CD4-positive, alpha-beta memory T cell (primary cell): ENCODE measurements at regions of chr5 and their contacts with region 1.

Region 1: DNA sequence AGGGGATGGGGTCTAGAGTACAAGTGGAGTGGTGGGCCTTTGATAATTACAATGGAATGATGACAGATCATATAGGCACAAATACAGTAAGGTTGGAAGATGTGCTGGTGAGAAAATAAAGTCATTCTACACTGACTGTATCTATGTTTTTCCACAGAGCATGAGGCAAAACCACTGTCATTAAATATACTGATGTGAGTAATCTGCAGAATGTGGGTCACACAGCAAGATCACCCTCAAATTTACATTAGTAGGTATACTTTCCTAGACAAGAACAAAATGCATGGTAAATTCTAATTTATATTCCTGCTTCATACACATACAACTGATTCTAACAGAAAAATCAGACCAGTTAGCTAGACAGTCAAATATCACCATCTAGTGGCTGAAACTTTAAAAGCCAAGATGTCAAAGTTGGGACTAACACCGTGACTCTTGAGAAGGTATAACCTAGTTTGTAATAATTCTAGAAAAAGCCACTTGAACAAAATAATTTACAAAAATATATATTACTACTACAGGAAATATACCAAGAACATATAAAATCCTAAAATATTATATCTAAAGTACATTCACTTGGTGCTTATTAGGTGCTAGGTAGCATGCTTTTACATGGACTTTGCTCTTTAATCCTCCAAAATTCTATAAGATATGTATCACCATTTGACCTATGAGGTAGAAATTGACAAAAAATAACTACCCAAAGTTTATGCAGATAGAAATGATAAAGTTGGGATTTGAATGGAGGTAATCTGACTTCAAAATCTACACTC is 19.5 kb downstream of the TTC33 start:
- DNase-seq: peak in 4 of 5 donors; percentile 51 to 62 (median 57)
- H3K4me3 ChIP-seq: no peak overlapping the region
- H3K4me3 Mint-ChIP-seq: no peak overlapping the region
- H3K27ac ChIP-seq: no peak overlapping the region
- H3K27ac Mint-ChIP-seq: peak overlapping the region in 3 of 7 donors; percentile 23 to 65 (median 24)
- H3K4me1 ChIP-seq: no peaks in the 10 kb centered on the region
- H3K4me1 Mint-ChIP-seq: peaks cover 11 to 20% (median 17%) of the 10 kb centered on the region in 4 donors
- H3K27me3 ChIP-seq: no peaks in the 10 kb centered on the region
- H3K27me3 Mint-ChIP-seq: no peaks in the 10 kb centered on the region

Region 2: GRCh38 chr5:39714036-39714698 is 1022.1 kb before region 1 on chr5:
- CTCF ChIA-PET with region 1: interaction called, 28 read pairs
- POLR2A ChIA-PET with region 1: no interaction called
- intact Hi-C with region 1: loop called (anchors 1 kb)
- DNase-seq: peak in 4 of 5 donors; percentile 38 to 47 (median 43)
- H3K4me3 ChIP-seq: no peak overlapping the region
- H3K4me3 Mint-ChIP-seq: no peak overlapping the region
- H3K27ac ChIP-seq: no peak overlapping the region
- H3K27ac Mint-ChIP-seq: no peak overlapping the region
- H3K4me1 ChIP-seq: no peaks in the 10 kb centered on the region
- H3K4me1 Mint-ChIP-seq: no peaks in the 10 kb centered on the region
- H3K27me3 ChIP-seq: no peaks in the 10 kb centered on the region
- H3K27me3 Mint-ChIP-seq: peaks cover 0 to 2% of the 10 kb centered on the region in 2 donors

Region 3: DNA sequence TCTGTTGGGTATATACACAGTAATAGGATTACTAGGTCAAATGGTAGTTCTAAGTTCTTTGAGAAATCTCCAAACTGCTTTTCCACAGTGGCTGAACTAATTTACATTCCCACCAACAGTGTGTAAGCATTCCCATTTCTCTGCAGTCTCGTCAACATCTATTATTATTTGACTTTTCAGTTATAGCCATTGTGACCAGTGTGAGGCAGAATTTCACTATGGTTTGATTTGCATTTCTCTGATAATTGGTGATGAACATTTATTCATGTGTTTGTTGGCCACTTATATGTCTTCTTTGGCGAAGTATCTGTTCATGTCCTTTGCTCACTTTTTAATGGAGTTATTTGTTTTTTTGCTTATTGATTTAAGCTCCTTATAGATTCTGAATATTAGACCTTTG is 715.3 kb before region 1 on chr5:
- CTCF ChIA-PET with region 1: no interaction called
- POLR2A ChIA-PET with region 1: no interaction called
- intact Hi-C with region 1: loop called (anchors 5 kb)
- DNase-seq: peak in 1 of 5 donors; percentile 2
- H3K4me3 ChIP-seq: no peak overlapping the region
- H3K4me3 Mint-ChIP-seq: no peak overlapping the region
- H3K27ac ChIP-seq: no peak overlapping the region
- H3K27ac Mint-ChIP-seq: peak overlapping the region in 1 of 7 donors; percentile 53
- H3K4me1 ChIP-seq: no peaks in the 10 kb centered on the region
- H3K4me1 Mint-ChIP-seq: no peaks in the 10 kb centered on the region
- H3K27me3 ChIP-seq: no peaks in the 10 kb centered on the region
- H3K27me3 Mint-ChIP-seq: no peaks in the 10 kb centered on the region

Region 4: GRCh38 chr5:40361378-40361777 is 374.9 kb before region 1 on chr5:
- CTCF ChIA-PET with region 1: no interaction called
- POLR2A ChIA-PET with region 1: no interaction called
- intact Hi-C with region 1: loop called (anchors 1 kb)
- DNase-seq: peak in 4 of 5 donors; percentile 33 to 44 (median 38)
- H3K4me3 ChIP-seq: no peak overlapping the region
- H3K4me3 Mint-ChIP-seq: peak overlapping the region; percentile 1 to 58 (median 15)
- H3K27ac ChIP-seq: peak overlapping the region; percentile 37
- H3K27ac Mint-ChIP-seq: peak overlapping the region; percentile 1 to 80 (median 14)
- H3K4me1 ChIP-seq: peaks cover 19% of the 10 kb centered on the region
- H3K4me1 Mint-ChIP-seq: peaks cover 11 to 31% (median 23%) of the 10 kb centered on the region in 4 donors
- H3K27me3 ChIP-seq: no peaks in the 10 kb centered on the region
- H3K27me3 Mint-ChIP-seq: no peaks in the 10 kb centered on the region

Region 5: GRCh38 chr5:40879163-40879942 is 143.1 kb after region 1 on chr5:
- CTCF ChIA-PET with region 1: interaction called, 3 read pairs
- POLR2A ChIA-PET with region 1: no interaction called
- intact Hi-C with region 1: loop called (anchors 1 kb)
- DNase-seq: peak in 4 of 5 donors; percentile 29 to 37 (median 34)
- H3K4me3 ChIP-seq: no peak overlapping the region
- H3K4me3 Mint-ChIP-seq: peak overlapping the region in 2 of 8 donors; percentile 31 to 43
- H3K27ac ChIP-seq: no peak overlapping the region
- H3K27ac Mint-ChIP-seq: no peak overlapping the region
- H3K4me1 ChIP-seq: no peaks in the 10 kb centered on the region
- H3K4me1 Mint-ChIP-seq: peaks cover 0 to 2% (median 1%) of the 10 kb centered on the region in 4 donors
- H3K27me3 ChIP-seq: no peaks in the 10 kb centered on the region
- H3K27me3 Mint-ChIP-seq: peaks cover under 1 to 3% of the 10 kb centered on the region in 2 donors